Mammary epithelial cell (primary cell): ENCODE measurements at regions of chr19 and their contacts with region 1.

Region 1: DNA sequence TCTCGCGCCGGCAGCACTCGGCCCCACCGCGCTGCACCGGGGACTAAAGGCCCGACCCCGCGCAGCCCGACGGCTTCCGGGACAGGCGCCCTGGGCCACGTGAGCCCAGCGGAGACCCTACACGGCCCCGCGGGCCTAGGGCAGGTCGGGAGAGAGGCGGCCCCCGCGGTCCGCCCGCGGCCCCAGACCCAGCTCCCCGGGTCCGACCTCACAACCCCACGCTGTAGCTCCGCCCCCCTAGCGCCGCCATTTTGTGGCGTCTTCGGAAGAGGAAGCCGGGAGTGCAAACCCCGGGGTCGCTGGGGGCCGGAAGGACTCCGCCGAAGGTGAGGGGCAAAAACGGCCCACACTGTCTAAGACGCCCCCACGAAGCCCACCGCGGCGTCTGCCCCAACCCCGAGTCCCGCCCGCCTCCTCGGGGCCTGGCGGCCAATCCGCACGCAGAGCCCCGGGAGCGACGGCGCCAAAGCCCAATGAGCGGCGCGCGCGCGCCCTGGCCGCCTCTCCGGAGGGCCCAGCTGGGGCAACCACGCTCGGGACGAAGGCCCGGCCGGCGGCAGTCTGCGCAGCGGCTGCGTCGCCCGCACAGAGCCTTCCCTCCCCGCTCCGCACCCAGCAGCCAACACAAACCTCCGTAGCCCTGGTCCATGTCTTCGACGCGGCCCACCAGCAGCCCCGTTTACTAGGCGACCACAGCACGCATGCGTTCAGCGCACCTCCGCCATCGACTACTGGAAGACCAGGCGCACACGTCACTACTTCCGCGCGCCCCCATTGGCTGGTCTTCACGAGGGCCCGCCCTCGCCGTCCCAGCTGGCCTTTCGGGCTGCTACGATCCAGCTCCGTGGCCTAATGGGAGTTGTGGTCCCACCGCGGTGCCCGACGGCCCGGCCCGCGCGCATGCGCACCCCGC is at the start of gene AKAP8:
- DNase-seq: peak; percentile 99
- H3K4me3 ChIP-seq: peak within 1 kb of the TSS; percentile 88 to 100 (median 91)
- H3K27ac ChIP-seq: peak within 1 kb of the TSS; percentile 86
- H3K4me1 ChIP-seq: peaks cover 24% of the 10 kb centered on the region
- H3K27me3 ChIP-seq: no peaks in the 10 kb centered on the region
- CTCF ChIP-seq: no peak
- total RNA-seq, gene AKAP8: 12.8 to 33.2 TPM

Region 2: GRCh38 chr19:15418588-15419412 is 39.5 kb after region 1 on chr19 and contains the start of gene AKAP8L:
- CTCF ChIA-PET with region 1: interaction called, 3 read pairs
- dilution Hi-C with region 1: no loop called
- in situ Hi-C with region 1: no loop called
- intact Hi-C with region 1: loop called (anchors 1 kb)
- DNase-seq: peak; percentile 99
- H3K4me3 ChIP-seq: peak within 1 kb of the TSS; percentile 80 to 99 (median 92)
- H3K27ac ChIP-seq: peak within 1 kb of the TSS; percentile 60
- H3K4me1 ChIP-seq: peaks cover 23% of the 10 kb centered on the region
- H3K27me3 ChIP-seq: no peaks in the 10 kb centered on the region
- CTCF ChIP-seq: peak; percentile 51 to 77
- total RNA-seq, gene AKAP8L: 55.0 to 75.9 TPM